ENCODE measurements at regions of chr9 and their contacts with region 1.

Region 1: DNA sequence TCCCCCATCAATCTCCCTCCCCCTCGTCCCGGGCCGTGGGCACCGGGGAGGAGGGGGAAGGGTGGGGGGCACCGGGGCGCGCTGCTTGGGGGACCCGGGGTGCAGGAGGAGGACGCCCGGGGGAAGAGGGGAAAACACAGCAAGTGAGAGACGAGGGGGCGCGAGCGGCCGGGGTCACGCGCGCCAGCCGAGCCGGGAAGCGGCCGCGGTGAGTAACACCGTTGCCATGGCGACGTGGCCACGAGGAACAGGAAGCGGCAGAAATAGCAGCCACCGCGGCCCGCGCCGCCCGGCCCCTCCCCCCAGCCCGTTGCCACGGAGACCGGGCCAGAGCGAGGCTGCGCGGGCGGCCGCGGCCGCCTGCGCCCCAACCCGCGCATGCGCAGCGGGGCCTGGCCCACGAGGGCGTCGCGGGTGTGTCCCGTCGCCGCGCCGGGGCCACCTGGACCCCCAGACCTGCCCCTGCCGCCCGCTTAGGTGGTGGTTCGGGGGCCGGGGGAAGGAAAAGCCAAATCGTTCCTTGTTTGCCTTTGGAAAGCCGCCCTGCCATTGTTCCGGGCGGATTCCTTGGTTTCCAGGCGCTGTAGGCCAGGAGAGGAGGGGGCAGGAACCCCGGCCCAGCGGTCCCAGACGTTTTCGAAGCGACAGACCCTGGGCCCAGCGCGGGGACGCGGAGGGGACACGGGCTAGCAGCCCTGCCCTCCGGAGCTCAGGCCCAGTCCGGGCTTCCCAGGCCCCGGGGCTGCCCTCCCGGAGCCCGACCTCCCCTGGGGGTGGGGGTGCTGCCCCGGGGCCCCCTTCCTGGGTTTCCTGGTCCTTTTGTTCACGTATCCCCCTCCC is 207.1 kb downstream of the C9orf50 start:
- DNase-seq: peak; percentile 99
- H3K4me3 ChIP-seq: peak overlapping the region; percentile 53 to 57
- H3K27ac ChIP-seq: peak overlapping the region; percentile 99
- H3K4me1 ChIP-seq: peaks cover 5 to 16% of the 10 kb centered on the region in 2 donors
- H3K27me3 ChIP-seq: no peaks in the 10 kb centered on the region
- CTCF ChIP-seq: peak in 1 of 4 experiments; percentile 36
- POLR2A ChIP-seq: peak; percentile 98 to 99

Region 2: DNA sequence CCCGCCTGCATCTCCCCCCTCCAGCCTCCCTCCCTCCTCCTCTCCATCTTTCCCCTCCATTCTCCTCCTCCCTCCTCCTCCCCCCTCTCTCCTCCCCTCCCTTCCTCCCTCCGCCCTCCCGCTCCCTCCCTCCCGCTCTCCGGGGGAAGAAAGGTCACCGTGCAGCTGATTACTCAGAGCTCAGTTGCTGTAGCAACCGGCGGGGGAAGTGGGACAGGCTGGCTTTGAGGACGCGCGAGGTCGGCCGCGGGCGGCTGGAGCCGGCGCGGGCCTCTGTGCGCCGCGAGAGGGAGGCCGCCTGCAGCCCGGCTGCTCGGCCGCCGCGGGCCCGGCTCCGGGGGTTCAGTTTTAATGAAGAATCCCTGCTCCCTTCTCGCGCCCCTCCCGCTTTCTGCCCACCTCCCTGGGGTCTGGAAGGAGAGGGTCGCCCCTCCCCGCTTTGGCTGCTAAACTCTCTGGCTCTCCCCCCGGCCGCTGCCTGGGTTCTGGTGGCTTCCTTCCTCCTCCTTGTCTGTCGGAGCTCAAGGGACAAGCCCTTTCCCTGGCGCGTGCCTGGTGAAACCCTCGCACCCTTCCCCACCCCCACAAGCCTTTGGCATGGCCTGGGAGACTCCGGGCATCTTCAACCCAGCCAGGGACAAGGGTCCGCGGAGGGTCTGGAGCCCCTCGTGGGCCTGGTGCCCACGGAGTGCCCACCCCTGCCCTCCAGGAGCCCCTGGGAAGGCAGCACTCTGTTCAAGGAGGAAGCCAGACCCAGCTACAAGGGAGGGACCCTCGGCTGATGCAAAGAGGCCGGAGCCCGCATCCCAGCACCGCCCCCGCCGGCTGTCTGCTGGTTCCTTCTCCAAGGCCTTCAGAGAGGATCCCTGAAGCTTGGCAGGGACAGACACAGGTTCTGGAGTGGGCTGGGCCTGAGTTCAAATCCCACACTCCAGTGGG is 46.8 kb after region 1 on chr9:
- intact Hi-C with region 1: loop called (anchors 5 kb)
- DNase-seq: peak; percentile 97 to 99
- H3K4me3 ChIP-seq: peak overlapping the region; percentile 35 to 42
- H3K27ac ChIP-seq: peak overlapping the region; percentile 99
- H3K4me1 ChIP-seq: peaks cover 14 to 39% of the 10 kb centered on the region in 2 donors
- H3K27me3 ChIP-seq: no peaks in the 10 kb centered on the region
- CTCF ChIP-seq: peak in 2 of 4 experiments; percentile 41 to 60
- POLR2A ChIP-seq: peak; percentile 90 to 91

Measured in uterus (tissue), 4 donors.